ENCODE measurements at regions of chr3 and their contacts with region 1.

Region 1: DNA sequence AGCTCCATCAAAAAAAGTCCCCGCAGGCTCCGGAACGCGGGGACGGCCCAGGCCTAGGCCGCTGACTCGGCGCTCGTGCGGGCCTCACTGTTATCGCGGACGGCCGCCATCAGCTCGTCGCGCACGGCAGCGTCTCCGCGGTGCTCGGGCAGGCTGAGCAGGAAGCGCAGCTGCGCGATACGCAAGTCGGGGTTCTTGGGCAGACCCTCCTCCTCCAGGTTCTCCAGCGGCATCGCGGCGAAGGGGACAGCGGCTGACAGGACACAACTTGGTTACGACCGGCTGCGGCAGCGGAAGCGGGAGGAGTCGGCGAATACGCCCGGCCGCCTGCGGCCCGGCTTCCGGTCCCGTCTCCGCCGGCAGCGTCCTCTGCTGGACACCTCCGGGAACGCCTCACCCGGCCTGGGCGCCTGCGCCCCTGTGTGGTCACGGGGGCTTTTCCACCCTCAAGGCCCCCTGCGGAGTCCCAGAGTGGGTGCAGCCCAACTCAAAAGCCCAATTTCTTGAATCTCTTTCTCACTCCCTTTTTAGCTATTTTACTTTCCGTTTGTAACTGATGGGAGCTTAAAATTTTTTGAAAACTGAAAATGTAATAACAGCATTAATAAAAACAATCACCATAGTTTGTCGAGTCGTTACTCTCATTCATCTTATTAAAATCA is at the start of gene PSMD6:
- DNase-seq: no peak
- H3K4me3 ChIP-seq: peak within 1 kb of the TSS; percentile 98
- CTCF ChIP-seq: peak; percentile 100

Region 2: GRCh38 chr3:64011685-64012084 is 11.6 kb before region 1 on chr3:
- CTCF ChIA-PET with region 1: interaction called, 19 read pairs
- POLR2A ChIA-PET with region 1: no interaction called
- DNase-seq: no peak
- H3K4me3 ChIP-seq: no peak overlapping the region
- CTCF ChIP-seq: no peak

Region 3: GRCh38 chr3:64049136-64049535 is 25.8 kb after region 1 on chr3:
- CTCF ChIA-PET with region 1: interaction called, 10 read pairs
- POLR2A ChIA-PET with region 1: no interaction called
- DNase-seq: no peak
- H3K4me3 ChIP-seq: no peak overlapping the region
- CTCF ChIP-seq: no peak

Region 4: GRCh38 chr3:64224826-64225610 is 201.7 kb after region 1 on chr3 and contains the start of gene PRICKLE2:
- CTCF ChIA-PET with region 1: interaction called, 15 read pairs
- POLR2A ChIA-PET with region 1: no interaction called
- DNase-seq: peak; percentile 69
- H3K4me3 ChIP-seq: peak within 1 kb of the TSS; percentile 52
- CTCF ChIP-seq: peak; percentile 22

Region 5: GRCh38 chr3:64267721-64268604 is 244.6 kb after region 1 on chr3:
- CTCF ChIA-PET with region 1: interaction called, 22 read pairs
- POLR2A ChIA-PET with region 1: no interaction called
- DNase-seq: no peak
- H3K4me3 ChIP-seq: peak overlapping the region; percentile 69
- CTCF ChIP-seq: no peak

Region 6: DNA sequence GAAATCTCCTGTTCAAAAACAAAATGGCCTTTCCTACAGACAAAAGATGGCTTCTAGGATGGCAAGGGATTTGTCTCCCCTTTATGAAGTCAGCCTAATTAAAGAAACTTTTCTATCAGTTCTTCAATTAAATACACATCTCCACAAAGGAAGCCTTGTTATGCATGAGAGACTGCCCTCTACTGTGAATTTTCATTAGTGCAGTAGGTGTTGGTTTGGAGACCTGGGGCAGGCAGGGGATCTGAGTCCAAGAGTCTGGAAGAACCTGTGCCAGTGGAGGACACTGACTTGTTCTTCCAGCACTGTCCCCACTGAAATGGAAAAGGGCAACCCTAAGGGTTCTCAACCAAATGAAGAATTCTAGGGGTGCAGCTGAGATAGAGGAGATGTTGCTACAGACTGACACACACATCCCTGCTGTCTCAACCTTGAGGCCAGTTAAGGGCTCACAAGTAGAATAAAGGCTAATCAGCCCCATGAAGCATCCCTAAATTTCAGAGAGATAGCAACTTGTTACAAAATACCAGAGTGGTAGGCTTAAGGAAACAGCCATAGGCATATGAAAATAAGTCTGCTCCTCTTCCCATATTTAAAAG is 376.0 kb after region 1 on chr3:
- CTCF ChIA-PET with region 1: interaction called, 23 read pairs
- POLR2A ChIA-PET with region 1: no interaction called
- DNase-seq: no peak
- H3K4me3 ChIP-seq: no peak overlapping the region
- CTCF ChIP-seq: peak; percentile 68

Region 7: GRCh38 chr3:64475037-64475436 is 451.7 kb after region 1 on chr3:
- CTCF ChIA-PET with region 1: interaction called, 24 read pairs
- POLR2A ChIA-PET with region 1: no interaction called
- DNase-seq: no peak
- H3K4me3 ChIP-seq: no peak overlapping the region
- CTCF ChIP-seq: no peak

Region 8: DNA sequence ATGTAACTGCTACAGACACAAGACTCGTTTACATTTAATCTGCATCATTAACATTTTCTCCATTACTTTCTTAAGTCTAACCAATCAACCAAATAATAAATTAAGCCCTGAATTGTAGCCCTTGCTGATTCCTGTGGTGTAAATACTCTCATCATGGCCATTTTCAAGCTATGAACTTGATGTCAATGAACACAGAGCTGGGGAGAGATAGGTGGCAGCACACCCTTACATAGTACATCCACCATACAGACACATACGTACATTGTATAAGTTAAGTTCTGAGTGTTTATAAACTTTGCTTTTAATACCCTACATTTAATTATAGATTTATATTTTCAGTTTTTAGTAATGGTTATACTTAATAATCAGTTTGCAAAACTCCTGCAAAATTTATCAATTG is 582.9 kb after region 1 on chr3:
- CTCF ChIA-PET with region 1: no interaction called
- POLR2A ChIA-PET with region 1: no interaction called
- DNase-seq: no peak
- H3K4me3 ChIP-seq: no peak overlapping the region
- CTCF ChIP-seq: no peak